Left ventricle myocardium inferior (tissue), 1 donor: ENCODE measurements at regions of chr20 and their contacts with region 1.

Region 1: DNA sequence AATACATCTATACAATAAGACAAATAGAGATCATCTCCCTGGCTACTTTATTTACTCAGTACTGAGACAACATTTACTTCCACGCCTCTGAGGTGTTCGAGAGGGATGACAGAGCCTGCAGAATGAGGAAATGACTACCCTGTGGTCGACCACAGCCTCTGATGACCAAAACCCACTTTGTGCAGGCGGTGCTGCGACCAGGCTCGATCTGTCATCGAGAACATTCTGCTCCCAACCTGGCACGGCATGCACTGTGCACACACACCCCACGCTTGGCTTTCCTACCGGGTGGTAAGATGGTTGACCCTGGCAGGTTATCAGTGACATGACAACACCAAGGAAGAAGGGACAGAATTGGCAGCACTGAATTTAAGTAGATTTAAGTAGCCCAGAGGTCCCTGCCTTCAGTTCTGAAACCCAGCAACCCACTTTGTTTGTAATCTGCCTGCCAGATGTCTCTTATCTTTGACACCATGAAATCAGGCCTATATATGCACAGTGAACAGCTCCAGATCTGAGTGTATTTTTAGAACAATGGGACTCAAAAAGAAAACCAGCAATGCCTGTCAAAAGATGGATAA is 42.6 kb downstream of the TTI1 start:
- DNase-seq: peak; percentile 71
- H3K4me3 ChIP-seq: no peak overlapping the region
- H3K27ac ChIP-seq: peak overlapping the region; percentile 91
- H3K4me1 ChIP-seq: peaks cover 100% of the 10 kb centered on the region
- H3K27me3 ChIP-seq: no peaks in the 10 kb centered on the region
- CTCF ChIP-seq: no peak

Region 2: DNA sequence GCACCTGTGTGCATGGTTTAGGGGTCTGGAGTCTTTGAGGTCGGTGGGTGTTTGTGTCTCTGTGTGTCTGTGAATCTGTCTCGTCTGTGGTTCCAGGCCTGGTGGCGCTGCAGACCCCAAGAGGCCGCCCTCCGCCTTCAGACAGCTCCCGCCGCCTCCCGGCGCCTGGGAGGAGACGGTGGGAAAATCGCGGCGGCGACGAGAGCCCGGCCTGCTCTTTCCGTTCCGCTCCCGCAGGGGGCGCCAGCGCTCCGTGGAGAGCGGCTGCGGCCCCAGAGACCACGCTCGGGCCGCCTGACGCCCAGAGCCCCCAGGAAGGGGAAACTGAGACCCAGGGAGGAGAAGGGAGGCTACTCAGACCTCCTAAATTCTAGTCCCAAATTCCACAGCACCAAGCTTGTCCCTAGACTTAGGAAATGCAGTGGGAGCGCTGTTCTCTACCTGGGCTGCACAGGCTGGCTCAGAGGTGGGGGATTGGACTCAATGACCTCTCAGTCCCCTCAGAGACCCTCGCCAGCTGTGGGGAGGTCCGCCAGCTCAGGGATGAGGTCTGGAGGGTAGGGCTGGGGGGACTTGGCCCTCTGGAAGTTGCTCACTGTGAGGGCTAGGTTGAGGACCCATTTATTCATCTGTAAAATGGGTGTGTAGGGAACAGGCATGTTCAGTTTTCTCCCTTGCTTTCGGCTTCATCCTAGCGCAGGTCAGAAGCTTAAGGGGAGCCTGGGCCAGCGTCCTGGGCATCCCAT is 426.1 kb before region 1 on chr20:
- intact Hi-C with region 1: loop called (anchors 10 kb)
- DNase-seq: peak; percentile 25
- H3K4me3 ChIP-seq: no peak overlapping the region
- H3K27ac ChIP-seq: no peak overlapping the region
- H3K4me1 ChIP-seq: peaks cover 6% of the 10 kb centered on the region
- H3K27me3 ChIP-seq: peaks cover 85% of the 10 kb centered on the region
- CTCF ChIP-seq: peak; percentile 92

Region 3: DNA sequence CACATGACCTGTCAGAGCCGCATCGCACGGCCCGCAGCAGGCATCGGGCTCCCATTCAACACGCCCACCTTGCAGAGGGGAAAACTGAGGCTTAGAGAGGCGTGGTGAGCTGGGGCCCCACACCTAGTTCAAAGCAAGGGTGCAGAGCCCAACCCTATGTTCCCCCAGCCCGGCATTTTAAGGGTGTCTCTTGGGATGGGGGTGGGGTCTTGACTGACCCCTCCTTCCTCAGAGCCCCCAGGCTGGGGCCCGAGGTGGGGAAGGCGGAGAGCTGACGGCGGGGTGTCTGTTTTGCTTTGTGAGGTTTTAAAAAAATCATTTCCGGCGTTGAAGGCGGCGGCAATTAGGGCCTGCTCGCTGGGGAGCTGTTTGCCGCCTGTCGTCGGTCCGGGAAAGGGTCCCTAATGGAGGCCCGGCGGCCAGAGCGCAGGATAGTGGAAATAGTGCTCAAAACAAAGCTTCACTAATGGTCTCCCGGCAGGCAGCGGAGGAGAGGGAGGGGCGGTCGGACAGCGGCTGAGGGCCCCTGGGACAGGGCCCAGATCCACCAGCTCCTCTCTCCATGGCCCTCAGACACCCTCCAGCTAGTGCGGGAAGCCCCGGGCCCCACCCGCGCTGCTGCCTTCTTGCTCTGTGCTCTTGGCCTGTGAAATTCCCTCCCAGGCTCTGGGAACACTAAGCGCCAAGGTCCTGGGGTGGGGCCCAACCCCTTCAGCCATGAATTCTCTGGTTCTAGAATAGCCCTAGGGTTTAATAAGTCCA is 75.8 kb before region 1 on chr20:
- intact Hi-C with region 1: no loop called
- DNase-seq: no peak
- H3K4me3 ChIP-seq: peak overlapping the region; percentile 41
- H3K27ac ChIP-seq: no peak overlapping the region
- H3K4me1 ChIP-seq: peaks cover 19% of the 10 kb centered on the region
- H3K27me3 ChIP-seq: peaks cover 98% of the 10 kb centered on the region
- CTCF ChIP-seq: no peak

Region 4: GRCh38 chr20:38321959-38322598 is 331.4 kb after region 1 on chr20:
- intact Hi-C with region 1: no loop called
- DNase-seq: no peak
- H3K4me3 ChIP-seq: no peak overlapping the region
- H3K27ac ChIP-seq: no peak overlapping the region
- H3K4me1 ChIP-seq: no peaks in the 10 kb centered on the region
- H3K27me3 ChIP-seq: peaks cover 51% of the 10 kb centered on the region
- CTCF ChIP-seq: peak; percentile 73